HCT116 (cell line): ENCODE measurements at regions of chr7 and their contacts with region 1.

Region 1: DNA sequence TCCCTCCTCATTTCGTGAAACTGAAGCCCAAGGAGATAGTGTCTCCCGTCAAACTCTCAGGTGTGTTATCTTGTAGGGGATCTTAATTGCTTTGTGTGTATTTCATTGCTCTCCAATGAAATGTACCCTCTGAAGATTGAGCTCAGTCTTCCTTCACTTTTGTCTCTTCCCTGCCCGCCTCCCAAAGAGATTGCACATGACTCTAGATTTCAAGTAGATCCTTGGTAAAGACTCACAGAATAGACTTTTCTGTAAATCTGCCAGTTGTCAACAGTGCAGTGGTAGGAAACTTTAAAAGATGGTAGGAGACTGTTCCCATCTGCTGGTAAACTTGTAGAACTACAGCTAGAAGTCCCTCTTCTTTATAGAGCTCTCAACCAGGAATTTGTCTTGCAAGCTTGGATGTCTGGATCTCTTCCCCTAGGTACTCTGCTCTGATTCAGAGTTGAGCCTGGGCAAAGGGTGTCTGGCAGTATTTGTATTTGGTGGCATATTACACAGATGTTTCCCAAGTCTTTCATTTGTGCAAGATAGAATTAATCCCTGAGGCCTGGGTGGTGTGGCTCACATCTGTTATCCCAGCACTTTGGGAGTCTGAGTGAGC is 9.6 kb downstream of the CCL26 start:
- DNase-seq: peak; percentile 40
- ATAC-seq: peak; percentile 93
- H3K4me3 ChIP-seq: no peak overlapping the region
- H3K27ac ChIP-seq: no peak overlapping the region
- H3K4me1 ChIP-seq: no peaks in the 10 kb centered on the region
- H3K27me3 ChIP-seq: no peaks in the 10 kb centered on the region
- CTCF ChIP-seq: peak; percentile 62 to 77 (median 68); a peak in 5 of 6 replicates
- POLR2A ChIP-seq: no peak
- RAD21 ChIP-seq: peak; percentile 92

Region 2: GRCh38 chr7:75617634-75618234 is 144.7 kb before region 1 on chr7:
- CTCF ChIA-PET with region 1: interaction called, 3 read pairs
- POLR2A ChIA-PET with region 1: no interaction called
- RAD21 ChIA-PET with region 1: no interaction called
- intact Hi-C with region 1: loop called (anchors 1 kb)
- DNase-seq: no peak
- ATAC-seq: no peak
- H3K4me3 ChIP-seq: no peak overlapping the region
- H3K27ac ChIP-seq: no peak overlapping the region
- H3K4me1 ChIP-seq: no peaks in the 10 kb centered on the region
- H3K27me3 ChIP-seq: no peaks in the 10 kb centered on the region
- CTCF ChIP-seq: no peak
- POLR2A ChIP-seq: no peak
- RAD21 ChIP-seq: no peak

Region 3: GRCh38 chr7:75842836-75843446 is 80.5 kb after region 1 on chr7:
- CTCF ChIA-PET with region 1: no interaction called
- POLR2A ChIA-PET with region 1: no interaction called
- RAD21 ChIA-PET with region 1: no interaction called
- intact Hi-C with region 1: no loop called
- DNase-seq: no peak
- ATAC-seq: peak; percentile 22; the same call in 1 of the 2 replicates
- H3K4me3 ChIP-seq: no peak overlapping the region
- H3K27ac ChIP-seq: no peak overlapping the region
- H3K4me1 ChIP-seq: peaks cover 0 to 6% of the 10 kb centered on the region in 2 experiments; a peak in 1 of 4 replicates
- H3K27me3 ChIP-seq: no peaks in the 10 kb centered on the region
- CTCF ChIP-seq: no peak
- POLR2A ChIP-seq: no peak
- RAD21 ChIP-seq: no peak